PC-9 (cell line): ENCODE measurements at regions of chr1 and their contacts with region 1.

Region 1: DNA sequence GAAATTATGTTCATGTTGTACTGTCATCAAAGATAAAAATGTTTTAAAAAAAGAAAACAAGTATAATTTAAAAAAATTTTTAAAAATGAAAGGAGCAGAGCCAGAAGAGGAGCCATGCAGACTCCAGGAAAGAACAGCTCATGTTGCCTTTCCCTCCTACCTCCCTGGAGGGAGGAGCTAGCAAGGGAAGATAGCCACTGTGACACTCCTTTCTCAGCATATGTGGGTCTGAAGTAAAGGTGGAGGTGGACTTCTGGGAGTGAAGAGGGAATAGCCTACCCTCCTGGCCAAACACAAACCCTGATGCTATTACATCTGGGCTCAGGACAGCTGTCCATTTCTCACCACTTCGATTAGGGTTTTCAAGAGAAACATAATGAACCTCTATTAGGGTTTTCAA is 54.2 kb downstream of the SLC2A1 start:
- DNase-seq: no peak
- H3K4me3 ChIP-seq: no peak overlapping the region
- H3K27ac ChIP-seq: no peak overlapping the region
- H3K4me1 ChIP-seq: peaks cover 11% of the 10 kb centered on the region
- H3K27me3 ChIP-seq: no peaks in the 10 kb centered on the region
- CTCF ChIP-seq: no peak

Region 2: DNA sequence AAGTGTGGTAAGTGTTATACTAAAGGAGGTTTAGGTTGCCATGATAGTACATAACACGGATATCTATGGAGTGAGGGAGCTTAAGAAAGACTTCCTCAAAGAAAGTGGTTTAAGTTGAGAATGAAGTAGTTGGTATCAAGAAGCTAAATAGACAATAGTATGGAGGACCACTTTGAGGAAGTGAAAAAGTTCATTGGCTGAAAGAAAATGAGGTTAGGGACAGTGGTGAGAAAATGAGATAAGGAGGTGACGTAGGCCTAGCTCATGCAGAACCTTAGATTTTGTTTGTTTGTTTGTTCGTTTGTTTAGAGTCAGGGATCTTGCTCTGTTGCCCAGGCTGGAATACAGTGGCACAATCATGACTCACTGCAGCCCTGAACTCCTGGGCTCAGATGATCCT is 318.4 kb before region 1 on chr1:
- CTCF ChIA-PET with region 1: interaction called, 12 read pairs
- POLR2A ChIA-PET with region 1: no interaction called
- intact Hi-C with region 1: no loop called
- DNase-seq: no peak
- H3K4me3 ChIP-seq: no peak overlapping the region
- H3K27ac ChIP-seq: no peak overlapping the region
- H3K4me1 ChIP-seq: no peaks in the 10 kb centered on the region
- H3K27me3 ChIP-seq: no peaks in the 10 kb centered on the region
- CTCF ChIP-seq: no peak

Region 3: DNA sequence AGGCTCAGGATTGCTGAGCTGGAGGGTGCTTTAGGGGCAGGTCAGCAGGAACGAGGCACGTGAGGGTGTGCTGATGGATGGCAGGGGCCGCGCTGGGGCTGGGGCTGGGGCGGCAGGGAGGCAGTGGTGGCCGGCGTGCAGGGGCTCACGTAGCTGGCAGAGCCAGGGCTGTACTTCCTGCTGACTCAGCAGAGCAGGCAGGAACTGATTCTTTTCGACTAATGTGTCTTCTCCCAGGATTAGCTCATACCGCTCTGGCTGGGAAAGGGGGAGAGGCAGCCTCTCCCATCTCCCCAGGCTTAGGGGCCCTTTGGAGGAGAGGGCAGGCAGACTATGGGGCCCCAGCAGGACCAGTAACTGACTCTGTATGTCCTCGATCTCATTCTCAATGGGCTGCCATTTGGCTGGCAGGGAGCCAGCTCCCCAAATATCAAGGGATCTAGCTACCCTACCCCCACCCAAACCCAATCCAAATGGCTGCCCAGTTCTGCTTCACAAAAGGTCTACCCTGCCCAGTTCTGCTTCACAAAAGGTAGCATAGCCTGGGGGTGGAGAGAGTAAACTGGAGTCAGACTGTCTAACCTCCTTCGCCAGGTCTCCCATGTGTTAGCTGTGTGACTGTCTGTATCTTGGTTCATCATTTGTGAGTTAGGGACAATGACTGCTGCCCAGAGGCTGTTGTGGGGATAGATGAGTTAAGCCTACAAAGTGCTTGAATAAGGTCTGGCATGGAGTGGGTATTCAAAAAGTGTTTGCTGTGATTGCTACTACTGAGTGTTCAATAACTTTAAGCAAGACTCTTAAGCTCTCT is 154.3 kb after region 1 on chr1:
- CTCF ChIA-PET with region 1: no interaction called
- POLR2A ChIA-PET with region 1: interaction called, 23 read pairs
- intact Hi-C with region 1: no loop called
- DNase-seq: no peak
- H3K4me3 ChIP-seq: no peak overlapping the region
- H3K27ac ChIP-seq: no peak overlapping the region
- H3K4me1 ChIP-seq: no peaks in the 10 kb centered on the region
- H3K27me3 ChIP-seq: no peaks in the 10 kb centered on the region
- CTCF ChIP-seq: no peak